Activated T-helper 1 cell treated with anti-CD3 and anti-CD28 coated beads, Interleukin-12 subunit alpha, Interleukin-12 subunit beta, Interleukin-2, Interleukin-4 antibody, amounts not matched to agents 30 ng/mL and 10 ng/mL and 1 ng/mL, durations not matched to agents 14 hours and 24 hours and 36 hours (primary cell): ENCODE measurements at regions of chr16 and their contacts with region 1.

Region 1: GRCh38 chr16:56608043-56608875 is at the start of gene MT2A:
- DNase-seq: peak; percentile 89
- H3K4me3 Mint-ChIP-seq: peak within 1 kb of the TSS; percentile 97
- H3K27ac Mint-ChIP-seq: peak within 1 kb of the TSS; percentile 98
- H3K4me1 Mint-ChIP-seq: peaks cover 58% of the 10 kb centered on the region
- H3K27me3 Mint-ChIP-seq: no peaks in the 10 kb centered on the region
- total RNA-seq, gene MT2A: 348 and 365 TPM in 2 replicates

Region 2: DNA sequence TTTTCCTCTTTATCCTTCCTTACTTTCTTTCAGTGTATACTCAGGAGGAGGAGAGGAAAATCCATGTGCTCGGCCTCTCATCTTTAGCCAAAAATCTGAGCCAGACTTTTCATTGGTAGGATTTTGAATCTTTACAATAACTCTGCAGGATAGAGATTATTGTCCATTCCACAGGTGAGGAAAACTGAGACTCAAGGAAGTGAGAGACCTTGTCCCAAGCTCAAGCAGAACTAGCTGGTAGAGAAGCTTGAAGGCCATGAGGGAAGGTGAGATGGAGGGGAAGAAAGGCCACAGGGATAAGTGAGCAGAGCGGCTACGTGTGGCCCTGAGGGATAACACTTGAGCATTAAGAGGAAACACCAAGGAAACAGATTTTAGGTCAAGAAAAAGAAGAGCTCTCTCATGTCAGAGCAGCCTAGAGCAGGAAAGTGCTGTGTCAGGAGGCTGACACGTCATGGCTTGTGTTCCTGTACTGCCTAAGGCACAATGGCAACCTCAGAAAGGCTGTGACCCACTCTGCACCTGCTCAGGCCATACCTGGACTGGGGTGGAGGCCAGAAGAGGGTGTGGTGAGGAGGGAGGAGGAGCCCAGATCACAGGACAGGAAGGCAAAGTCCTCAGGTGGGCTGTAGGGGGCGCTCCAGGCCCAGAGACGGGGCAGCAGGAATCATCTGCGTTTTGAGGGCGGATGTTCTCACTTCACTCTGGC is 31.5 kb before region 1 on chr16:
- intact Hi-C with region 1: loop called (anchors 2 kb)
- DNase-seq: peak; percentile 81
- H3K4me3 Mint-ChIP-seq: no peak overlapping the region
- H3K27ac Mint-ChIP-seq: no peak overlapping the region
- H3K4me1 Mint-ChIP-seq: peaks cover 10% of the 10 kb centered on the region
- H3K27me3 Mint-ChIP-seq: peaks cover 23% of the 10 kb centered on the region

Region 3: DNA sequence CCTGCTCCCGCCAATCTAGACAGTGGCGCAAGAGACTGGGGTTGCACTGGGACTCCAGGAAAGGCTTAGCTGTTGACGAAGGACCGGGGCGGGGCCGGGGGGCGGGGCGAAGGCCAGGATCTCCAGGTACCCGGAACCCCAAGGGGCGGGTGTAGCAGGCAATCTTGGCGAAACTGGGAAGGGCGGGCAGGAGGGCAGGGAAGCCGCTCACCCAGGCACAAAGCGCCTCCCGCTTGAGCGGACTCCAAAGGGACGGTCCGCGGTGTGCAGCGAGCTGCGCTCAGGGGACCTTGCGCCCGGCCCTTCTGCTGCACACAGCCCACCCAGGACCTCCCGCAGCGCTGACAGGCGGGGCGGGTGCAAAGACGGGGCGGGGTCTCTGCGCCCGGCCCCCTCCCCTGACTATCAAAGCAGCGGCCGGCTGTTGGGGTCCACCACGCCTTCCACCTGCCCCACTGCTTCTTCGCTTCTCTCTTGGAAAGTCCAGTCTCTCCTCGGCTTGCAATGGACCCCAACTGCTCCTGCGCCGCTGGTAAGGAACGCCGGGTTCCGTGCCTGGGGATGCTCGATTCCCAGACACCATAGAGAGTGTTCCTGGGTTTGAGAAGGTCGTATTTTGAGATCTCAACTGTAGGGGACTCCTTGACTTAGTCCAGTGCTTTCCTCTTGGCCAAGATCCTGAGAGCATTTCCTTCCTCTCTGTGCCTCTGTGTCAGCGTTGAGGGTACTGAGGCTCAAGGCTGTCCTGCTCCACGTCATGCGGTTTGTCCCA is 49.5 kb after region 1 on chr16 and contains the start of gene MT1F:
- intact Hi-C with region 1: loop called (anchors 1 kb)
- DNase-seq: peak; percentile 38
- H3K4me3 Mint-ChIP-seq: peak within 1 kb of the TSS; percentile 98
- H3K27ac Mint-ChIP-seq: peak within 1 kb of the TSS; percentile 82
- H3K4me1 Mint-ChIP-seq: peaks cover 26% of the 10 kb centered on the region
- H3K27me3 Mint-ChIP-seq: peaks cover 21% of the 10 kb centered on the region
- total RNA-seq, gene MT1F: 4.3 and 5.2 TPM in 2 replicates

Region 4: DNA sequence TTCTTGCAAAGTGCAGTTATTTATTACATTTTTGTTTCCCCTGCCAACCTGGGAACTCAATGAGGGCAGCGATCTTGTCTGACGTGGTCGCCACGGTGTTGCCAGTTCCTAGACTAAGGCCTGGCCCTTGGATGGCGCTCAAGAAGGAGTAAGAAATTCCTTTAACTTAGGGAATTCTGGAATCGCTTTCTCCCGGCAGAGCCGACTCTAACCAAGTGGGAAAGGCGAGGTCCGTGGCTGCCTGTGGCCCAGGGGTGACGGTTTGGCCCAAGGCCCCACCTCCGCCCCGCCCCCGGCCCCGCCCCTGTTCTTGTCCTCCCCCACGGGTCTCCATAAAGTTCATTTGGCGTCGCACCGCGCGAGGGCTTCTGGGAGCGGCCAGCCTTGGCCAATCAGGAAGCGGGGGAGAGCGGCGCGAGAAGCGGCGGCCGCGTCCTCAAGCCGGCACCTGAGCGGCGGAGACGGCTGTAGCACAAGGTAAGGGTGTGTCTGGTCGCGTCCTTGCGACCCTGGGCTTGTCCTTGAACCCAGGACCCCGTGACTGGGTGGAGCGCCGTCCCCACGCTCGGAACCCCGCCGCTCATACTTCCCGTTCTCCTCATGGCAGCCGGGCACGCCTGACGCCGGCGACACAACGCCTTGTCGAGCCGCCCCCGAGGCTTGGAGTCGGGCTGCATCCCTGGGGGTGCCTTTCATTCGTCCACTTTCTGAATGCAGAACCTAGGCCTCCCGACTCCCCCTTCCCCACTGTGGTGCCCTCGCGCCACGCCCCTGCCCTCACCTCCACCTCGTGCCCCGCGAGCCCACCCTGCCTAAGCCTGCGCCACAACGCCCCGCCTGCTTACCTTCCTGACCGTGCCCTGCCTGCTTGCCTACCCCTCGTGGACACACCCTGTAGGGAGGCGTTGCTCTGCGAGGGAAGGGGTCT is 121.7 kb after region 1 on chr16 and contains the start of gene NUP93:
- intact Hi-C with region 1: loop called (anchors 1 kb)
- DNase-seq: peak; percentile 87
- H3K4me3 Mint-ChIP-seq: no peak within 1 kb of the TSS
- H3K27ac Mint-ChIP-seq: peak within 1 kb of the TSS; percentile 88
- H3K4me1 Mint-ChIP-seq: peaks cover 13% of the 10 kb centered on the region
- H3K27me3 Mint-ChIP-seq: peaks cover 2% of the 10 kb centered on the region
- total RNA-seq, gene NUP93: 150 and 152 TPM in 2 replicates

Region 5: GRCh38 chr16:57045694-57046381 is 437.6 kb after region 1 on chr16:
- intact Hi-C with region 1: loop called (anchors 10 kb)
- DNase-seq: no peak
- H3K4me3 Mint-ChIP-seq: no peak overlapping the region
- H3K27ac Mint-ChIP-seq: peak overlapping the region; percentile 72
- H3K4me1 Mint-ChIP-seq: peaks cover 29% of the 10 kb centered on the region
- H3K27me3 Mint-ChIP-seq: no peaks in the 10 kb centered on the region